Activated CD8-positive, alpha-beta T cell treated with anti-CD3 and anti-CD28 coated beads for 36 hours (primary cell): ENCODE measurements at regions of chr7 and their contacts with region 1.

Region 1: GRCh38 chr7:42940985-42941847 is 9.0 kb downstream of the MRPL32 start:
- DNase-seq: peak; percentile 93
- ATAC-seq: peak; percentile 61
- H3K4me3 Mint-ChIP-seq: no peak overlapping the region
- H3K27ac Mint-ChIP-seq: no peak overlapping the region
- H3K4me1 Mint-ChIP-seq: peaks cover 33% of the 10 kb centered on the region
- H3K27me3 Mint-ChIP-seq: no peaks in the 10 kb centered on the region
- CTCF ChIP-seq: peak; percentile 86

Region 2: GRCh38 chr7:42953994-42954393 is 12.8 kb after region 1 on chr7:
- CTCF ChIA-PET with region 1: interaction called, 15 read pairs
- POLR2A ChIA-PET with region 1: no interaction called
- intact Hi-C with region 1: no loop called
- DNase-seq: no peak
- ATAC-seq: no peak
- H3K4me3 Mint-ChIP-seq: no peak overlapping the region
- H3K27ac Mint-ChIP-seq: no peak overlapping the region
- H3K4me1 Mint-ChIP-seq: no peaks in the 10 kb centered on the region
- H3K27me3 Mint-ChIP-seq: no peaks in the 10 kb centered on the region
- CTCF ChIP-seq: no peak

Region 3: DNA sequence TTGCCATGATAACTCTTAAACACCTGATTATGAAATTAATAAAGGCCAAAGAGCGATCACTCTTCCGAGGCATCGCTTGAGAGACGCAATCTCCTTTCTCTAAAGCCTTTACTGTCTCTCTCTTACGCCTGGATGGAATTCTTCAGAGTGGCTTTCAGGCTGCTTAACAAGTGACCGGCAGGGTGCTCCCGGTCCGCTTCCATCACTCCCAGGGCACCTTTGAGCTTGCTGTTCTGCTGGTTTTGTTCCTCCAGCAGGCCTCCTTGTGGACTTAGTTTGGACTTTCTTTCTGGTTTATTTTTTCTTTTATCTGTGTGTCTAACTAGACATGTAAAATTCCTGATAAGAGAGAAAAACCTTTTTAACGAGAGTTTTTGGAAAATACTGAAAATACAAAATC is 51.8 kb after region 1 on chr7:
- CTCF ChIA-PET with region 1: no interaction called
- POLR2A ChIA-PET with region 1: no interaction called
- intact Hi-C with region 1: no loop called
- DNase-seq: no peak
- ATAC-seq: no peak
- H3K4me3 Mint-ChIP-seq: no peak overlapping the region
- H3K27ac Mint-ChIP-seq: no peak overlapping the region
- H3K4me1 Mint-ChIP-seq: no peaks in the 10 kb centered on the region
- H3K27me3 Mint-ChIP-seq: peaks cover 24% of the 10 kb centered on the region
- CTCF ChIP-seq: no peak

Region 4: DNA sequence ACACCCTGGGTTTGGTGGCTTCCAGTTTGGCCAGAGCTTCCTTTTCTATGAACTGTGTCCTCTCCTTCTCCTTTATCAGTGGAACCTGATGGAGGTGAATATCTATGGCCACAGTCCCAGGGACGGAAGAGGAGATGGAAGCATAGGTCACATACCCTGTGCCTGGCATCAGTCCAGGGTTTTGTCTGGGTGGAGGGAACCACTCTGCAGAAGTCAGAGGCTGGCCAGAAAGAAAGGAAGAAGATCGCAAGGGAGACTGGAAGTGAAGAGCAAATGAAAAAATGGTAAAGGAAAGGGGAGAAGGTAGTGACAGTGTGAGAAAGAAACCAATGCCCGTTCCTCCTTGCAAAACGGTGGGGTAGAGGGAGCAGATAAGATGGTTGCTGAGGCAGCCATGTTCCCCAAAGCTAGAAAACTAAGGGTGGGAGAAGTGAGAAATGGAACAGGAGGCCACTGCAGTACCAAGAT is 93.4 kb after region 1 on chr7:
- CTCF ChIA-PET with region 1: no interaction called
- POLR2A ChIA-PET with region 1: no interaction called
- intact Hi-C with region 1: no loop called
- DNase-seq: no peak
- ATAC-seq: no peak
- H3K4me3 Mint-ChIP-seq: no peak overlapping the region
- H3K27ac Mint-ChIP-seq: no peak overlapping the region
- H3K4me1 Mint-ChIP-seq: no peaks in the 10 kb centered on the region
- H3K27me3 Mint-ChIP-seq: peaks cover 9% of the 10 kb centered on the region
- CTCF ChIP-seq: no peak

Region 5: GRCh38 chr7:43108255-43109011 is 167.2 kb after region 1 on chr7:
- CTCF ChIA-PET with region 1: interaction called, 11 read pairs
- POLR2A ChIA-PET with region 1: no interaction called
- intact Hi-C with region 1: loop called (anchors 10 kb)
- DNase-seq: peak; percentile 83
- ATAC-seq: peak; percentile 89
- H3K4me3 Mint-ChIP-seq: no peak overlapping the region
- H3K27ac Mint-ChIP-seq: no peak overlapping the region
- H3K4me1 Mint-ChIP-seq: no peaks in the 10 kb centered on the region
- H3K27me3 Mint-ChIP-seq: peaks cover 54% of the 10 kb centered on the region
- CTCF ChIP-seq: peak; percentile 80